ENCODE measurements at regions of chr3 and their contacts with region 1.

Region 1: GRCh38 chr3:138923531-138923994 is 23.4 kb downstream of the FOXL2 start:
- DNase-seq: peak; percentile 85
- H3K4me3 ChIP-seq: no peak overlapping the region
- H3K27ac ChIP-seq: no peak overlapping the region
- H3K4me1 ChIP-seq: peaks cover 7% of the 10 kb centered on the region
- H3K27me3 ChIP-seq: peaks cover 2% of the 10 kb centered on the region in 2 experiments
- CTCF ChIP-seq: peak; percentile 86
- POLR2A ChIP-seq: no peak

Region 2: GRCh38 chr3:138417559-138417982 is 506.0 kb before region 1 on chr3:
- CTCF ChIA-PET with region 1: interaction called, 92 read pairs
- POLR2A ChIA-PET with region 1: no interaction called
- dilution Hi-C with region 1: no loop called
- intact Hi-C with region 1: loop called (anchors 1 kb)
- DNase-seq: peak; percentile 64
- H3K4me3 ChIP-seq: no peak overlapping the region
- H3K27ac ChIP-seq: no peak overlapping the region
- H3K4me1 ChIP-seq: no peaks in the 10 kb centered on the region
- H3K27me3 ChIP-seq: peaks cover 0 to 5% of the 10 kb centered on the region in 2 experiments
- CTCF ChIP-seq: peak; percentile 89 to 92
- POLR2A ChIP-seq: no peak

Region 3: GRCh38 chr3:138479438-138479863 is 444.1 kb before region 1 on chr3:
- CTCF ChIA-PET with region 1: interaction called, 120 read pairs
- POLR2A ChIA-PET with region 1: no interaction called
- dilution Hi-C with region 1: no loop called
- intact Hi-C with region 1: loop called (anchors 1 kb)
- DNase-seq: peak; percentile 55
- H3K4me3 ChIP-seq: no peak overlapping the region
- H3K27ac ChIP-seq: no peak overlapping the region
- H3K4me1 ChIP-seq: no peaks in the 10 kb centered on the region
- H3K27me3 ChIP-seq: no peaks in the 10 kb centered on the region
- CTCF ChIP-seq: peak; percentile 79 to 87
- POLR2A ChIP-seq: no peak

Region 4: GRCh38 chr3:138608322-138609135 is 315.0 kb before region 1 on chr3 and contains the start of gene FAIM:
- CTCF ChIA-PET with region 1: interaction called, 10 read pairs
- POLR2A ChIA-PET with region 1: no interaction called
- dilution Hi-C with region 1: no loop called
- intact Hi-C with region 1: no loop called
- DNase-seq: peak; percentile 77
- H3K4me3 ChIP-seq: peak within 1 kb of the TSS; percentile 45 to 86 (median 69)
- H3K27ac ChIP-seq: peak within 1 kb of the TSS; percentile 66
- H3K4me1 ChIP-seq: peaks cover 4% of the 10 kb centered on the region
- H3K27me3 ChIP-seq: no peaks in the 10 kb centered on the region
- CTCF ChIP-seq: no peak
- POLR2A ChIP-seq: peak; percentile 10
- total RNA-seq, gene FAIM: 9.9 and 11.9 TPM in 2 replicates

Region 5: DNA sequence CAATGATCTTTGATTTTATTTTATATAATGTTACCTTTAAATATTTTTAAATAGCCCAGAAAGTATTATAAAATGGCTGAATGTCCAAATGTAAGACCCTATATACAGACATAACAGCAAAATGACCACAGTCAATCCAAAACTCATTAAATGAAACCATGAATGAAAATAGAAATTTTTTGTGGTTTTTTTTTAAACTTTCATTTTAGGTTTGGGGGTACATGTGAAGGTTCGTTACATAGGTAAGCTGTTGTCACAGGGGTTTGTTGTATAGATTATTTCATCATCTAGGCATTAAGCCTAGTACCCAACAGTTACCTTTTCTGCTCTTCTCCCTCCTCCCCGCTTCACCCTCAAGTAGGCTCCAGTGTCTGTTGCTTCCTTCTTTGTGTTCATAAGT is 206.2 kb before region 1 on chr3:
- CTCF ChIA-PET with region 1: interaction called, 16 read pairs
- POLR2A ChIA-PET with region 1: no interaction called
- dilution Hi-C with region 1: no loop called
- intact Hi-C with region 1: no loop called
- DNase-seq: no peak
- H3K4me3 ChIP-seq: no peak overlapping the region
- H3K27ac ChIP-seq: no peak overlapping the region
- H3K4me1 ChIP-seq: no peaks in the 10 kb centered on the region
- H3K27me3 ChIP-seq: no peaks in the 10 kb centered on the region
- CTCF ChIP-seq: no peak
- POLR2A ChIP-seq: no peak

Region 6: GRCh38 chr3:138946181-138947059 is 22.9 kb after region 1 on chr3:
- CTCF ChIA-PET with region 1: interaction called, 15 read pairs
- POLR2A ChIA-PET with region 1: no interaction called
- dilution Hi-C with region 1: no loop called
- intact Hi-C with region 1: no loop called
- DNase-seq: no peak
- H3K4me3 ChIP-seq: peak overlapping the region in 2 of 3 experiments; percentile 27 to 29
- H3K27ac ChIP-seq: no peak overlapping the region
- H3K4me1 ChIP-seq: peaks cover 16% of the 10 kb centered on the region
- H3K27me3 ChIP-seq: peaks cover 79 to 99% of the 10 kb centered on the region in 2 experiments
- CTCF ChIP-seq: peak; percentile 14 to 27
- POLR2A ChIP-seq: no peak

Region 7: DNA sequence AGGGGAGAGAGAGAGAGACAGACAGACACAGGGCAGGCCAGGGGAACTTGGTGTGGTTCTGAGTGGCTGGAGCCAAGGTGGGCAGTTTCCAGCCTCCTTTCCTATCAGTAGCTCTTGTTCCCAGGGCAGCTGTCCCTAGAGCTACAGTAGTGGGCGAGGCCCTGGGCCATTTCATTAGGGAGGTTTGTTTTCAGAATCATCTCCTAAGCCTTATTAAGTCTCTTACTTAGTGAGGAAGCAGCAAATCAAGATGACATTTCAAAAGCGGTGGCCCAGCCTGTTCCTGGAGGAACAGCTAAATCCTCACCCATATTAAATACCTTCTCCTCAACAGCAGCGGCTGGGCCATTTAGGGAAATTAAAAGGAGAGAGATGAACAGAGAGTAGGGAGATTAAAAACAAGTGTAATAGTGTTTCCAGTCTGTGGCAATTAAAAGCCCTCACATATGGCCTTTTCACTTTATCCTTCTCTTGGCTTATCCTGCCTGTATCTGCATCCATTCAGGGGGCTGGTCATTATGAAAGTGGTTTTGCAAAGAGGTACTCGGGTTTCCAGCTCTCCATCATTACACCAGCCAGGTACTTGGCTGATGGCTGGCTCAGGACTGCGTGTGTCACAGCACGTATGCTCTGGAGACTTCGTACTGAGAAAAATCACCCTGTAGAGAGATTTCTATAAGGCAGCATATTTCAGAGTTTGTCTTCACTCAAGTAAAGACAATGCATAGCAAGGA is 213.1 kb after region 1 on chr3:
- CTCF ChIA-PET with region 1: no interaction called
- POLR2A ChIA-PET with region 1: no interaction called
- dilution Hi-C with region 1: no loop called
- intact Hi-C with region 1: no loop called
- DNase-seq: no peak
- H3K4me3 ChIP-seq: no peak overlapping the region
- H3K27ac ChIP-seq: no peak overlapping the region
- H3K4me1 ChIP-seq: no peaks in the 10 kb centered on the region
- H3K27me3 ChIP-seq: no peaks in the 10 kb centered on the region
- CTCF ChIP-seq: no peak
- POLR2A ChIP-seq: no peak